ENCODE measurements at regions of chr9 and their contacts with region 1.

Region 1: DNA sequence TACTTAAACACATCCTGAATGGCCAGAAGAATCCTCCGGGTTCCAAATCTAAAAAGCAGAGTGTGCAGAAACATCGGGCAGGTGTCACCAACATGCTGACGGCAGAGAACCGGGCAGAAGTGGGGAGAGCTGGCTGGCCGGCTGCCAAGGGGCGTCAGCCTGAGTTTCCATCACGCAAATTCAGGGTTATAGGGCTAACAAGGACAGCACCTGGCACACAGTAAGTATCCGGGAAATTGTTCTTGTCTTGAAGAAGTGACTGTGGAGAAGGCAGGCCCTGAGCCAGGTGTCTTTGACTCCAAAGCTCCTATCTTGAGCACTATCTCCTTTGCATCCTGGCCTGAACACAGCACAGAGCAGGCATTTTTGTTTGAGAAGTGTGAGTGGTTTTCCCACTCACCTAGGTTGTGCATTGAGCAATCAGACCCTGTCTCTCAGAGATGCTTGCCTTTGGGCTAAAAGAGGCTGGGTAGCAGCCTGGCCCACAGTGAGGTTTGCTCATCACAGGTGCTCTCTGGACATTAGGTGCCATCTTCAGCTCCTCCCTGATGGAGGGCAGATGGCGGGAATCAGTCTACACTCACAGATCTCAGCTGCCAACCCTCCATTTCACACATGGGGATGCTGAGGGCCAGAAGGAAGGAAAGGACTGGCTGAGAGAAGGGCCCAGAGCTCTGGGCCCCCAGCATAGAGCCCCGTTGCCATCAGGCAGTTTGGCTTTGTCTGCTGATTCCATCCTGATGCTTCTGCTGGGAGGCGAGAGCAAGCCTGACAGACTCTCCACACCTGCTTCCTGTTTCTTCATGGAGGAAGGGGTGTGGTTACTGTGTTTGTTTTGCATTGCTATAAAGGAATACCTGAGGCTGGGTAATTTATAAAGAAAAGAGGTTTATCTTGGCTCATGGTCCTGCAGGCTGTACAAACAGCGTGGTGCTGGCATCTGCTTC is 52.8 kb downstream of the WHRN start:
- DNase-seq: peak in 1 of 5 donors; percentile 28
- H3K4me3 ChIP-seq: no peak overlapping the region
- H3K4me3 Mint-ChIP-seq: peak overlapping the region in 5 of 7 donors; percentile 2 to 75 (median 34)
- H3K27ac ChIP-seq: no peak overlapping the region
- H3K27ac Mint-ChIP-seq: peak overlapping the region; percentile 19 to 86 (median 70)
- H3K4me1 ChIP-seq: peaks cover 25% of the 10 kb centered on the region
- H3K4me1 Mint-ChIP-seq: peaks cover 24 to 45% (median 34%) of the 10 kb centered on the region in 3 donors
- H3K27me3 ChIP-seq: no peaks in the 10 kb centered on the region
- H3K27me3 Mint-ChIP-seq: peaks cover 4 to 7% of the 10 kb centered on the region in 2 donors

Region 2: GRCh38 chr9:114434878-114435311 is 17.6 kb before region 1 on chr9:
- CTCF ChIA-PET with region 1: interaction called, 13 read pairs
- POLR2A ChIA-PET with region 1: no interaction called
- DNase-seq: no peak
- H3K4me3 ChIP-seq: no peak overlapping the region
- H3K4me3 Mint-ChIP-seq: no peak overlapping the region
- H3K27ac ChIP-seq: no peak overlapping the region
- H3K27ac Mint-ChIP-seq: no peak overlapping the region
- H3K4me1 ChIP-seq: peaks cover 5% of the 10 kb centered on the region
- H3K4me1 Mint-ChIP-seq: peaks cover 3 to 5% (median 5%) of the 10 kb centered on the region in 3 donors
- H3K27me3 ChIP-seq: no peaks in the 10 kb centered on the region
- H3K27me3 Mint-ChIP-seq: peaks cover 0 to 1% of the 10 kb centered on the region in 2 donors